ENCODE measurements at regions of chr1 and their contacts with region 1.

Region 1: GRCh38 chr1:161928056-161928455 is 95.6 kb downstream of the OLFML2B start:
- DNase-seq: no peak
- H3K4me3 ChIP-seq: no peak overlapping the region
- H3K27ac ChIP-seq: no peak overlapping the region
- H3K4me1 ChIP-seq: no peaks in the 10 kb centered on the region
- H3K27me3 ChIP-seq: no peaks in the 10 kb centered on the region
- CTCF ChIP-seq: no peak

Region 2: GRCh38 chr1:161305867-161306519 is 622.1 kb before region 1 on chr1:
- CTCF ChIA-PET with region 1: no interaction called
- POLR2A ChIA-PET with region 1: no interaction called
- intact Hi-C with region 1: no loop called
- DNase-seq: no peak
- H3K4me3 ChIP-seq: no peak overlapping the region
- H3K27ac ChIP-seq: no peak overlapping the region
- H3K4me1 ChIP-seq: peaks cover 9% of the 10 kb centered on the region
- H3K27me3 ChIP-seq: no peaks in the 10 kb centered on the region
- CTCF ChIP-seq: no peak

Region 3: DNA sequence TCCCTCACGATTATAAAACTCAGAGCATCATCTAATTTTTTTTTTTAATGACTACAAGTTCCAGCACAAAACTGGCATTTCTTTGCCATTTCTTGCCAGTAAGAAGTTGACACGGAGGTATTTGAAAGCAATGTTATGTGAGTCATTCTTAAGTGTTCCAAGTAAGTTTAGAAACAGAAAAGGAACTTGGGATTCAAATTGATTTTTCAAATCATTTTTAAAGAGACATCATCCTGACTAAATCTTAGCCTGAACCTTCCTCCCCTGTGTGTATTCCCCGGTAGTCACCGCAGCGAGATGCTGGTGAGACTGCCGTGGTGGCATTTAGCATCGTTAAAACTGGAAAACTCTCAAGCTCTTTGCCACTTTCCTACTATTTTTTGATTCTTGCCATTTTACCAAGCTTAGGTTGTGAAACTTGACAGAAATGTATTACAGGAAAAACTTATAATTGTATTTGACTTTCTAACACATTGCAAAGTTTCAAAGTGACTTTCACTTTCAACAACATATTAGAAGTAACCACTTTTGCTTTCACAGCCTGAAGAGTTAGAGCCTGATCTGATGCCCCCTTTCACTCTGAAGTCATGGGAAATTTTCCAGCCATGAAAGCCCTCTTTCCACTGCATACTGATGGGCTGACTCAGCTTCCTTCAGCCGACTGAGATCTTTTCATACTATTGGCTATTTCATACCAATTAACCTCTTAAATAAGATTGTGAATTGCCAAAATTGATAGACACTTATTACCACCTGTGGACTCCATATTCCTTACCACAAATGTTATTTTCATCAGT is 34.2 kb after region 1 on chr1:
- CTCF ChIA-PET with region 1: no interaction called
- POLR2A ChIA-PET with region 1: interaction called, 18 read pairs
- intact Hi-C with region 1: no loop called
- DNase-seq: no peak
- H3K4me3 ChIP-seq: no peak overlapping the region
- H3K27ac ChIP-seq: peak overlapping the region; percentile 34; the same call in 1 of the 2 replicates
- H3K4me1 ChIP-seq: peaks cover 14% of the 10 kb centered on the region; the same call in 1 of the 2 replicates
- H3K27me3 ChIP-seq: no peaks in the 10 kb centered on the region
- CTCF ChIP-seq: no peak

Measured in PC-9 (cell line).